K562 (cell line): ENCODE measurements at regions of chr7 and their contacts with region 1.

Region 1: GRCh38 chr7:136030862-136031318 is 53.7 kb upstream of the MTPN start:
- DNase-seq: no peak
- ATAC-seq: no peak
- H3K4me3 ChIP-seq: no peak overlapping the region
- H3K27ac ChIP-seq: no peak overlapping the region
- H3K4me1 ChIP-seq: peaks cover 10 to 22% of the 10 kb centered on the region in 2 experiments
- H3K27me3 ChIP-seq: no peaks in the 10 kb centered on the region
- CTCF ChIP-seq: no peak
- EP300 ChIP-seq: no peak
- POLR2A ChIP-seq: no peak
- RAD21 ChIP-seq: no peak

Region 2: DNA sequence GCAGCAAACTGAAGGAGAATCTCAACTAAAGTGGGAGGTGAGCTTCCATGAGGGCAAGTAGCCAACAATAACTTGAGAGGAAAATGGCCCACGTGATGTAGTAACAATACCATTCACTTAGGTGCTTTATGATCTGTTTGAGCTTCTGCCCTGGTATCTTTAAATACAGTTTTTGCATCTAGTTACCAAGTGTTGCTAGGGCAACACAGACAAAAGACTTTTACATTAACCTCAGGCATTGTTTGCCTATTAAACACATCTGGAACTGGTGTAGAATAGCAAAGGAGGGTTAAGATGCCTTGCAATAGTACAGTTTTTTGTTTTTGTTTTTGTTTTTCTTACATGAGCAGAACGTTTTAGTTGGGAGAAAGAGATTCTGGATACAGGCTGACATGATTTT is 43.9 kb after region 1 on chr7:
- CTCF ChIA-PET with region 1: no interaction called
- POLR2A ChIA-PET with region 1: interaction called, 3 read pairs
- in situ Hi-C with region 1: no loop called
- intact Hi-C with region 1: loop called (anchors 5 kb)
- DNase-seq: no peak
- ATAC-seq: no peak
- H3K4me3 ChIP-seq: no peak overlapping the region
- H3K27ac ChIP-seq: no peak overlapping the region
- H3K4me1 ChIP-seq: peaks cover 14 to 26% of the 10 kb centered on the region in 2 experiments
- H3K27me3 ChIP-seq: no peaks in the 10 kb centered on the region
- CTCF ChIP-seq: no peak
- EP300 ChIP-seq: no peak
- POLR2A ChIP-seq: no peak
- RAD21 ChIP-seq: no peak

Region 3: GRCh38 chr7:136086712-136087111 is 55.8 kb after region 1 on chr7:
- CTCF ChIA-PET with region 1: no interaction called
- POLR2A ChIA-PET with region 1: no interaction called
- in situ Hi-C with region 1: no loop called
- intact Hi-C with region 1: loop called (anchors 5 kb)
- DNase-seq: peak; percentile 39 to 84 (median 62)
- ATAC-seq: peak; percentile 96
- H3K4me3 ChIP-seq: no peak overlapping the region
- H3K27ac ChIP-seq: no peak overlapping the region
- H3K4me1 ChIP-seq: no peaks in the 10 kb centered on the region; a peak in 1 of 5 replicates
- H3K27me3 ChIP-seq: no peaks in the 10 kb centered on the region
- CTCF ChIP-seq: no peak
- EP300 ChIP-seq: no peak
- POLR2A ChIP-seq: peak; percentile 44; the same call in 1 of the 2 replicates
- RAD21 ChIP-seq: no peak

Region 4: GRCh38 chr7:136245327-136246004 is 214.6 kb after region 1 on chr7:
- CTCF ChIA-PET with region 1: no interaction called
- POLR2A ChIA-PET with region 1: no interaction called
- in situ Hi-C with region 1: no loop called
- intact Hi-C with region 1: loop called (anchors 5 kb)
- DNase-seq: peak in 2 of 4 experiments; percentile 29 to 76
- ATAC-seq: peak; percentile 75
- H3K4me3 ChIP-seq: no peak overlapping the region
- H3K27ac ChIP-seq: peak overlapping the region; percentile 75
- H3K4me1 ChIP-seq: peaks cover 15 to 39% of the 10 kb centered on the region in 2 experiments
- H3K27me3 ChIP-seq: no peaks in the 10 kb centered on the region
- CTCF ChIP-seq: no peak
- EP300 ChIP-seq: peak; percentile 98
- POLR2A ChIP-seq: no peak
- RAD21 ChIP-seq: no peak; a peak in 1 of 4 replicates